Activated CD4-positive, alpha-beta T cell treated with anti-CD3 and anti-CD28 coated beads, Interleukin-2, amount 10 ng/mL, durations not matched to agents 24 days and 14 days (primary cell): ENCODE measurements at regions of chr5 and their contacts with region 1.

Region 1: DNA sequence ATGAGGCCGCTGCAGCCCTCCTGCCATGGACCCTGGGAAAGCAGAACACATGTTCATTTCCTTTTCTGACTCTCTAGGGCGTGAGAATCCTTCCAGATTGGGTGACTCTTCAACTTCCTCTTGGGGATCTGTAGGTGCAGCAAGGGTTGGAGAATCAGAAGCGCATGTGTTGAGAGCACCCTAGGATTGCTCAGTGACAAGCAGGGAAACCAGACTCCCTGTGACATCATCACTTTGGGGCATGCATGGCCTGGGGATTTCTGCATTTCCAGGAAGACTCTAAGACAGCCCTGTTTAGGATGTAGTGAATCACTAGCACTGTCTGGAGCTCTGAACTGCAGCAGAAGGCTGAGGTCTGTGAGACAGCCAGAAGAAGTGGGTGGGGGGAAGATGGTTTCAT is 15.1 kb upstream of the LCP2 start:
- DNase-seq: peak; percentile 86
- H3K4me3 Mint-ChIP-seq: peak overlapping the region; percentile 76
- H3K27ac Mint-ChIP-seq: peak overlapping the region; percentile 94
- H3K4me1 Mint-ChIP-seq: peaks cover 48% of the 10 kb centered on the region
- H3K27me3 Mint-ChIP-seq: no peaks in the 10 kb centered on the region

Region 2: GRCh38 chr5:170253844-170254455 is 58.7 kb before region 1 on chr5:
- intact Hi-C with region 1: loop called (anchors 1 kb)
- DNase-seq: peak; percentile 88
- H3K4me3 Mint-ChIP-seq: peak overlapping the region; percentile 26
- H3K27ac Mint-ChIP-seq: peak overlapping the region; percentile 76
- H3K4me1 Mint-ChIP-seq: peaks cover 53% of the 10 kb centered on the region
- H3K27me3 Mint-ChIP-seq: no peaks in the 10 kb centered on the region

Region 3: GRCh38 chr5:170293273-170293672 is 19.4 kb before region 1 on chr5:
- intact Hi-C with region 1: loop called (anchors 1 kb)
- DNase-seq: peak; percentile 86
- H3K4me3 Mint-ChIP-seq: peak overlapping the region; percentile 97
- H3K27ac Mint-ChIP-seq: peak overlapping the region; percentile 78
- H3K4me1 Mint-ChIP-seq: peaks cover 76% of the 10 kb centered on the region
- H3K27me3 Mint-ChIP-seq: no peaks in the 10 kb centered on the region

Region 4: DNA sequence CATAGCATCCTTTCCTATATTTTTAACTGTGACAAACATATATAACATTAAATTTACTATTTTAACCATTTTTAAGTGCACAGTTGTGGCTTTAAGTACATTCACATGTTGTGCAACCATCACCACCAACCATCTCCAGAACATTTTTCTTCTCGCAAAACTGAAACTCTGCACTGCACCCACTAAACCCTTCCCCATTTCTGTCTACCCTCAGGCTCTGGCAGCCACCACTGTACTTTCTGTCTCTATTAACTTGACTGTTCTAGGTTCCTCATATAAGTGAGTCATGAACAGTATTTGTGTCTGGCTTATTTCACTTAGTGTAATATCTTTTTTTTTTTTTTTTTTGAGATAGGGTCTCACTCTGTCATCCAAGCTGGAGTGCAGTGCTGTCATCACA is 51.0 kb after region 1 on chr5:
- intact Hi-C with region 1: no loop called
- DNase-seq: no peak
- H3K4me3 Mint-ChIP-seq: no peak overlapping the region
- H3K27ac Mint-ChIP-seq: no peak overlapping the region
- H3K4me1 Mint-ChIP-seq: no peaks in the 10 kb centered on the region
- H3K27me3 Mint-ChIP-seq: peaks cover 7% of the 10 kb centered on the region

Region 5: DNA sequence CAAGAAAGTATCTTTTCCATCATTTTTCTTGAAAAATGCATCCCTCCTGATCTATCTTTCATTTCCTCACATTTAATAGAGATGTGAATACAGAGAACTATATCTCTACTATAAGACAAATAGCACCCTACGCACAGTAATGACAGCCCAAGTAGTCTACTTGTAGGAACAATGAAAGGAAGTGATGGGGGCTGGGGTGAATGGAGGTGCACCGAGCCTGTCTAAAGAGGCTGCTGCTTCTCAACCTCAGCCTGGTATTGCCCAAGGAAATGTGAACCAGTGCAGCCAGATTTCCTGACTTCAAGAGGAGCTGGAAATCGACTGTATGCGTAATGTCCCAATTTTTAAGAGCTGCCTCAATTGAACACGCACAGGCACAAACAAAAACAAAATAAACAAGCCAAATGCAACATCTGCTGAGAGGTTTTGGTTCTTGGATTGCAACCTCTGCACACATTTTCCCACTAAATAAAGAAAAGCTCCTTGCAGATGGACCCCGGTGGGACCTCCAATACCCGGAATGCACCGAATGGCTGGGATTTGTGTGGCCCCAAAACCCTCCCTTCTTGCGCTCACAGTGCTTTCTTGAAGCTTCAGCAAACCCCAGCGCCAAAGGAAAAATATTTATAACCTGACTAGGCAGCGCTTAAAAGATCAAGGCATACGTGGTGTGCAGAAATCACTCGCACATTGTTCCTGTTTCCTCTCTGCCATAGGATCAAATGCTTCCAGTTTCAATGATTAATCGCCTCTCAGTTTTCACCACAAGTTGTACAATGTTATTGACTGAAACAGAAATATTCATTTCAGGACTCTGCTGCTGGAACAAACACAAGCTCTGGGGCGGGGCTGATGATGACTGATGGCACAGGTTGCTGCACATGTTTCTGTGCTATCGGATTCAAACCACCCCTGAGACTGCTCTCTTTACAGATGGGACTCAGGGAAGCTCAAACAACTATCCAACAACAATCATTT is 259.5 kb after region 1 on chr5:
- intact Hi-C with region 1: loop called (anchors 5 kb)
- DNase-seq: peak; percentile 72
- H3K4me3 Mint-ChIP-seq: no peak overlapping the region
- H3K27ac Mint-ChIP-seq: peak overlapping the region; percentile 37
- H3K4me1 Mint-ChIP-seq: peaks cover 14% of the 10 kb centered on the region
- H3K27me3 Mint-ChIP-seq: peaks cover 37% of the 10 kb centered on the region